ENCODE measurements at regions of chr3 and their contacts with region 1.

Region 1: GRCh38 chr3:50572158-50572557 is 2.8 kb downstream of the HEMK1 start:
- DNase-seq: peak; percentile 69 to 78
- H3K4me3 ChIP-seq: no peak overlapping the region
- H3K27ac ChIP-seq: no peak overlapping the region
- H3K4me1 ChIP-seq: peaks cover 0 to 9% of the 10 kb centered on the region in 2 donors
- H3K27me3 ChIP-seq: no peaks in the 10 kb centered on the region
- CTCF ChIP-seq: peak; percentile 87 to 97 (median 92)
- POLR2A ChIP-seq: no peak

Region 2: DNA sequence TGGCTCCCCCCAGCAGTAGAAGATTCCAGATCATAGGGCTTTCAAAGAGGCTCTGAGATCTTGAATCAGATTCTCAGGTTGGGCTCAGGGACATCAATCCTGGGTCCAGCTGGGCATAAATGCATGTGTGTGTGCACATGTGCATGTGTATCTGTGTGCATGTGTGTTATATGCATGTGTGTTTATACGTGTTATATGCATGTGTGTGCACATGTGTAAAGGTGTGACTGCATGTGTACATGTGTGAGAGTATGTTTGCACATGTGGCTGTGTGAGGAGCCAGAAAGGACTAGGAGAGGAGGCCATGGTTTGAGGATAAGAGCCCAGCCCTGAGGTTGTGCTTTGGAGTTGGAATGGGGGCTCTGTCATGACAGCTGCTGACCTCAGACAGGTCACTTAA is 43.0 kb after region 1 on chr3:
- intact Hi-C with region 1: loop called (anchors 2 kb)
- DNase-seq: no peak
- H3K4me3 ChIP-seq: no peak overlapping the region
- H3K27ac ChIP-seq: no peak overlapping the region
- H3K4me1 ChIP-seq: peaks cover 0 to 15% of the 10 kb centered on the region in 2 donors
- H3K27me3 ChIP-seq: no peaks in the 10 kb centered on the region
- CTCF ChIP-seq: no peak
- POLR2A ChIP-seq: no peak

Measured in uterus (tissue), 4 donors.